ENCODE measurements at regions of chr5 and their contacts with region 1.

Region 1: GRCh38 chr5:144142139-144142823 is 28.2 kb downstream of the YIPF5 start:
- DNase-seq: no peak

Region 2: DNA sequence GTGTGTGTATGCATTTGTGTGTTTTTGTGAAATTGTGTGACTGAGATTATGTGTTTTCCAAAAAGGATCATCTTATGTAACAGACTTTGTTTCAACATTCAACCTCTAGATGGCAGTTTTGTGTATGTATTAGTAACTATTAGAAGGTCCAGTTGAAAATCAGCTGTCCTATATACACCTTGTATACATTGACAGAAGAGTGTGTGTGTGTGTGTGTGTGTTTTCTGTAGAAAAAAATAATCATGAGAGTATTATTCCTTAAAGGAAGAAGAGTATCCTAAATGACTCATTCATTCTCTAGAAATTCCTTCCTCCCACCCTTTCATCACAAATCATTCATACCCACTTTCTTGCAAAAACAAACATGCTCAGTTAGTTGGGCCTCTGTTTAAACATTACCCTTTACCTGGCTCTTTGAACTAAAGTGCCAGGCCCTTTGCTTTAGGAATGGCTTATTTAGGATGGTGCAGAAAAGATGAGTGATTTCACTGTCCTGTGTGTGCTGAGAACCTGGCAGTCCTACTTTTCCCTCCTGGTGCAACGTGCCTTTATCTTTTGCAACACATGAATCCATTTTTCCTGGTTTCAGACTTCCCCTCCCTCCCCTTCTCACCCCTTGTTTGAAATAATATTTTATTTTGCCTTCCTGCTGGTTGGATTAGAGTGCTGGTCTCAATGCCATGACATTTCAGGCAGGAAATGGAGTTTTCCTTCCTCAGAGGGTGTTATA is 1219.9 kb before region 1 on chr5:
- intact Hi-C with region 1: loop called in 1 of 2 experiments (anchors 10 kb)
- DNase-seq: no peak

Region 3: DNA sequence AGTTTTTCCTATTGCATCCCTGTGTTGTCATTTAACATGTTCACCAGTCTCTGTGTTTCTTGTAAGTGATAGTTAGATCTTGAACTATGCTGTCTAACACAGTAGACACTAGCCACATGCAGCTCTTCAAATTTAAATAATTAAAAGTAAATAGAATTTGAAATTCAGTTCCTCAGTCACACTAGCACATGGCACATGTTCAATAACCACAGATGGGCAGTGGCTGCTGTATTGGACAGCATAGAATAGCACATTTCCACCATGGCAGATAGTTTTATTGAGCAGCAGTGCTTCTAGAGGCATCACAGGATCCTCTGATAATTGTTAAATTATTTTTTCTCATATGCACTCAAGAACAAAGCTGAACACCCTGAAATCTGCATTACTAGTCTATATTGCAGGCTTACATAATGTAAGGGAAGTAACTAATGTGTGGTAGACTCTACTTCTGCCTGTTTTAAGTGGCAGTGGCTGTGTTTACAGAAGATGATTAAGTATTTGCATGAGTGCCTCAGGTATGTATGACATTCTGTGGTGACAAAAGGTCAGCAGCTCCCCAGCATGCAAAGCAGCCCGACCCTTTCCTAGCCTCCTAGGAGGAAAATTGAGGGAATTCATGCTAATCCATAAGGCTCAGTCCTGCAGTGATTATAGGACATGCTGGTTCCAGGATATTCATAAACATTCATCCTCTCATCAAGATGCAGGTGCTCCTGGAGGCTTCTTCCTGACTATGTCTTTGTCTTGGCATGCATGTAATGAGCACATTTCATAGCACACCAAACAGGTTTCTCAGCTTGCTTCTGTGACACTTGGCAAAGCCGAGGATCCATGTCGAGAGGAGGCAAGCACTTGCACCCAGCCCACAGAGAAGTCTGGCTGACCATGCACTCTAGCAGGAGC is 1839.6 kb after region 1 on chr5:
- intact Hi-C with region 1: loop called in 1 of 2 experiments (anchors 5 kb)
- DNase-seq: no peak